ENCODE measurements at regions of chr15 and their contacts with region 1.

Region 1: GRCh38 chr15:75201609-75202250 is at the start of gene C15orf39:
- DNase-seq: peak; percentile 84
- H3K4me3 ChIP-seq: peak within 1 kb of the TSS; percentile 69 to 87 (median 83)
- H3K27ac ChIP-seq: peak within 1 kb of the TSS; percentile 92 to 94 (median 92)
- H3K4me1 ChIP-seq: peaks cover 0 to 46% (median 42%) of the 10 kb centered on the region in 4 donors
- H3K27me3 ChIP-seq: no peaks in the 10 kb centered on the region
- CTCF ChIP-seq: peak; percentile 50 to 96 (median 56)
- EP300 ChIP-seq: no peak
- POLR2A ChIP-seq: peak; percentile 89 to 91
- total RNA-seq, gene C15orf39: 4.9 to 20.2 (median 12.0) TPM

Region 2: DNA sequence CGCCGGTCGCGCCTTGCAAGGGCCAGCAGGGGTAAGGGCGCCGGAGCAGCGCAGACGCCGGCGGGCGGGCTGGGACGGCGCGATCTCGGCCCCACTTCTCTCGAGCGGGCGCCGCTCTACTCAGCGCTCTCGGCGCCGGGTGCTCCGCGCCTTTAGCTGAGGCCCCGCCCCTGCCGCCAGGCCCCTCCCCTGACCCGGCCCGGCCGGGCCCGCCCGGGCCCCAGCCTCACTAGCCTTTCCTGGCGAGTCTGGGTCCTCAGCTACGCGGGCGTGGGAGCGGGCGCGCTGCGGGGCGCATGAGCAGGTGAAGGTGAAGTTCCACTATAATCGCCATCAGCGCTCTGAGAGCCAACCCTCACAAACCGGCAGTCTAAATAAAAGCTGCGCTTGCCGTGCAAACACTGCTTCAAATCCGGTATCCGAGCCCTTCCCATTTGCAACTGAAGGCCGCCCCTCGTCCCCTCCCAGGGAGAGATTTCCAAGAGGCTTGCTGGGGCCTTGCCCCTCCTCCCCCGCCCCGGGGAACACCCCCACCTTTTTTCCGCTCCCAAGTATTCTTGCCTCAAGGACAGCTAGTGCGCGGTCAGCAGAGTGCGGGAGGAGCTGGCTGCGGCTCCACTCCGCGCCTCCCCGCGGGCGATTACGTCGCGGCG is 245.0 kb before region 1 on chr15 and contains the start of gene RPP25:
- intact Hi-C with region 1: loop called (anchors 5 kb)
- DNase-seq: peak; percentile 90
- H3K4me3 ChIP-seq: peak within 1 kb of the TSS; percentile 33 to 65 (median 56)
- H3K27ac ChIP-seq: peak within 1 kb of the TSS; percentile 68 to 84 (median 70)
- H3K4me1 ChIP-seq: peaks cover 0 to 51% (median 40%) of the 10 kb centered on the region in 4 donors
- H3K27me3 ChIP-seq: peaks cover 20 to 63% (median 30%) of the 10 kb centered on the region in 3 donors
- CTCF ChIP-seq: no peak
- EP300 ChIP-seq: no peak
- POLR2A ChIP-seq: no peak
- total RNA-seq, gene RPP25: 3.7 to 4.8 (median 4.7) TPM

Region 3: DNA sequence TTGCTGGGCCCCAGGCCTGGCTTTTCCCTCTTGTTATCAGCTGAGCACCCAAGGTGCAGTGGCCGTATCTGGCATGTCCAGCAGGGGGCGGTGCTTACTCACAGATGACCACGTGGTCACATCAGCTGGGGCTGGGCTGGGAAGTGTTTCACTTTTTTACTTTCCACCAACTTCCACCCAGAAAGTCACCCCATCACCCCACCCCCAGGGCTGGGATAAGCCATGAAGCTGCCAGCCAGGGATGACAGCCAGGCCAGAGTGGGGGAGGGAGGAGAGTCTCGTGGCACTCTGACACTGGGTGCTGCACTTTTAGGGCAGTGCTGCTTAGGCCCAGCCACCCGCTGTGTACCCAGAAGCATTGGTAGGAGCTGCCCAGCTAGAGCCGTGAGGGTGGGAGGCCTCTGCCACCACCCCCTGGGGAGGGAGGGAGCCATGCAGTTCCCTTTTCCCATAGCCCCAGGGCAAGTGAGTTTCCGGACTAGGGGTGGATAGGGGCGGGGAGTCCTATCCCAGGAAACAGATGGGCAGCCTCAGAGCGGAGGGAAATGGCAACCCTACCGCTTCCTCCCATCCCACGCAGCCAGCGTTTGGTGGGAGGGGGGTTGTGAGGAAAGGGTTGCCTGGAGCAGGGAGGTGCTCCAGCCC is 172.2 kb before region 1 on chr15:
- intact Hi-C with region 1: loop called (anchors 1 kb)
- DNase-seq: peak; percentile 96
- H3K4me3 ChIP-seq: peak overlapping the region in 3 of 4 donors; percentile 18 to 31 (median 24)
- H3K27ac ChIP-seq: peak overlapping the region; percentile 68 to 76 (median 71)
- H3K4me1 ChIP-seq: peaks cover 0 to 35% (median 25%) of the 10 kb centered on the region in 4 donors
- H3K27me3 ChIP-seq: no peaks in the 10 kb centered on the region
- CTCF ChIP-seq: peak; percentile 91 to 95 (median 94)
- EP300 ChIP-seq: peak in 1 of 4 donors; percentile 3
- POLR2A ChIP-seq: no peak

Region 4: DNA sequence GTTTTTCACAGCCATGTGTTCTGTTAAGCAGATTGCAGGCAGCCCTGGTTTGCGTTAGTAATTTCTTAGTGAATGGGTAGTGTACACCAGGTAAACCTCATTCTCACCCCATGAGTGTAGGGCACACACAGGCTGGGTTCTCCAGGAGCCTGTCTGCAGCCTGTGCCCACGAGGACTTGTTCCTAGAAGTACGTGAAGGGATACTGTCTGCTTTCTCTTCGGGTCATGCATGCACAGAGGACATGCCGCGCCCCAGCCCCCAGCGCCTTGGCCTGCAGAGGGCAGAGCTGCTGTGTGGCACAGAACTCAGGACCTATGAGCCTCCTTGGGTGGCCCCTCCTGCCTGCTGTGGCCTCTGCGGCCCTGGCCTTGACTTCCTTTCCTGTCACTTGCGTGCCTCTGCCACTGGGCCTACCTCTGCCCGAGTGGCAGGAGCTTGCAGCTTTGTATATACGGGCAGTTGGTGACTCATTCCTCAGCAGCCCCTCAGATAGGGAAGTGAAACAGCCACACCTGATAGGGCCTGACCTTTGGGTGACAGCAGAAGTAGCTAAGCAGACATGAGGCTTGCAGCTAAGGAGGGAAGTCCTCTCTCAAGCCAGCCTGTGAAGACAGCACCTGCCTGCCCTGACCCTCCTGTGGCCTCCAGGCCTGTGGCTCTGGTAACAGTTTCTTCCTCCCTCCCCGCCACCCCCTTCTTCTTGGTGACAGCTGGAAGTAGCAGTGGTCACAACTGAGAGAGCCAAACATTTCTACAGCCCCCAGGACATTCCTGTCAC is 158.8 kb before region 1 on chr15:
- intact Hi-C with region 1: loop called (anchors 1 kb)
- DNase-seq: peak; percentile 84
- H3K4me3 ChIP-seq: peak overlapping the region in 1 of 4 donors; percentile 20
- H3K27ac ChIP-seq: peak overlapping the region; percentile 73 to 84 (median 80)
- H3K4me1 ChIP-seq: peaks cover 0 to 60% (median 47%) of the 10 kb centered on the region in 4 donors
- H3K27me3 ChIP-seq: no peaks in the 10 kb centered on the region
- CTCF ChIP-seq: peak in 3 of 4 experiments; percentile 7 to 53 (median 35)
- EP300 ChIP-seq: no peak
- POLR2A ChIP-seq: no peak

Region 5: DNA sequence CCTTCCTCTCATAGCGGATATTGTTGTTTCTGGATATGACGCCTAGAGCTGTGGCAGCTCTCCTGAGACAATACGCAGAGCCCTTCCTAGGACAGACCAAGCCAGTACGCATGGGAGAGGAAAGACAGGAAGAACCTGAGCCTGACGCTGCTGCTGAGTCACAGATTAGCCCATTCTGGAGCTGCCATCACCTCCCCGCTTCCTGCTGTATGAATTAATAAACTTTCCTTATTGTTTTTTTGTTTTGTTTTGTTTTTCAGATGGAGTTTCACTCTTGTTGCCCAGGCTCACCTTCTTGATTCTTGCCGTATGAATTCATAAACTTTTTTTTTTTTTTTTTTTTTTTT is 111.4 kb before region 1 on chr15:
- intact Hi-C with region 1: loop called (anchors 2 kb)
- DNase-seq: peak; percentile 79
- H3K4me3 ChIP-seq: no peak overlapping the region
- H3K27ac ChIP-seq: peak overlapping the region in 3 of 4 donors; percentile 14 to 79 (median 62)
- H3K4me1 ChIP-seq: peaks cover 0 to 11% (median 2%) of the 10 kb centered on the region in 4 donors
- H3K27me3 ChIP-seq: no peaks in the 10 kb centered on the region
- CTCF ChIP-seq: no peak
- EP300 ChIP-seq: peak in 2 of 4 donors; percentile 75 to 90
- POLR2A ChIP-seq: no peak

Region 6: GRCh38 chr15:75178171-75179075 is 23.3 kb before region 1 on chr15:
- intact Hi-C with region 1: loop called (anchors 2 kb)
- DNase-seq: peak; percentile 83
- H3K4me3 ChIP-seq: peak overlapping the region in 3 of 4 donors; percentile 33 to 46 (median 43)
- H3K27ac ChIP-seq: peak overlapping the region; percentile 55 to 83 (median 76)
- H3K4me1 ChIP-seq: peaks cover 0 to 78% (median 73%) of the 10 kb centered on the region in 4 donors
- H3K27me3 ChIP-seq: no peaks in the 10 kb centered on the region
- CTCF ChIP-seq: no peak
- EP300 ChIP-seq: no peak
- POLR2A ChIP-seq: peak in 1 of 2 donors; percentile 12